ENCODE measurements at regions of chr19 and their contacts with region 1.

Region 1: GRCh38 chr19:30812099-30812678 is 440.0 kb downstream of the ZNF536 start:
- DNase-seq: no peak
- H3K4me3 Mint-ChIP-seq: no peak overlapping the region
- H3K27ac Mint-ChIP-seq: no peak overlapping the region
- H3K4me1 Mint-ChIP-seq: no peaks in the 10 kb centered on the region
- H3K27me3 Mint-ChIP-seq: peaks cover 13% of the 10 kb centered on the region

Region 2: DNA sequence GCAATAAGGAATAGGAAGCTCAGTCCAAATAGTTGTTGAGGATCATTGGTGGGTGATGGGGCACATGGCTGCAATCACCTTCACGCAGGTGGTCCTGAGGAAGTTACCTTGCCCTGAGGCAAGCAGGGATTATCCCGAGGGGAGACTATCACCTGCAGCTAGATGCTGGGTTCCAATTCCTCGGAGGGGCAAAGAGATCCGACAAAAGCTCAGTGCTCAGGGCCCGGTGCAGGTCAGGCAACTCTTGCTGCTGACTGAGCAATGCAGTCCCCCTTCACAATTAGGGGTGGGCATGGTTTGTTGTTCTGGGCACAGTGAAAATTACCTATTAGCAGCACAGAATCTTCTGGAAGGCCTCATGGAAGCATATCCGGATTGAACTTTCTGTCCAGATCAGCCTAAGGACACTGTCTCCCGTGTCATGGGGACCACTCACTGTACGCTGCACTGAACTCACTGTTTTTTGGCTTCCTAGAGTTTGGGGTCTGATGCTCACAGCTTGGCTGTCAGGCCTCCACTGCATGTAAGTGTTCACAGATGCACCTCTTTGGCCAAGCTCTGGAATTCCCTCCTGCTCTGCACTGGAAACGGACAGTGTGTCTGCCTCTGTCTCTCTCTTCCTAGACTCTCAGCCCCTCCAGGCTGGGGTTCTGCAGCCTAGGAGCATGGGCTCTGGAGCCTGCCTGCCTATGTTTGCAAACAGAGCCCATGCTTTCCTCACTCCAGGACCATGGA is 67.3 kb before region 1 on chr19:
- CTCF ChIA-PET with region 1: no interaction called
- intact Hi-C with region 1: no loop called
- DNase-seq: no peak
- H3K4me3 Mint-ChIP-seq: no peak overlapping the region
- H3K27ac Mint-ChIP-seq: no peak overlapping the region
- H3K4me1 Mint-ChIP-seq: no peaks in the 10 kb centered on the region
- H3K27me3 Mint-ChIP-seq: peaks cover 5% of the 10 kb centered on the region

Region 3: GRCh38 chr19:30757837-30758617 is 54.2 kb before region 1 on chr19:
- CTCF ChIA-PET with region 1: no interaction called
- intact Hi-C with region 1: no loop called
- DNase-seq: no peak
- H3K4me3 Mint-ChIP-seq: no peak overlapping the region
- H3K27ac Mint-ChIP-seq: no peak overlapping the region
- H3K4me1 Mint-ChIP-seq: no peaks in the 10 kb centered on the region
- H3K27me3 Mint-ChIP-seq: peaks cover 2% of the 10 kb centered on the region

Region 4: GRCh38 chr19:30791088-30791487 is 21.1 kb before region 1 on chr19:
- CTCF ChIA-PET with region 1: no interaction called
- intact Hi-C with region 1: no loop called
- DNase-seq: no peak
- H3K4me3 Mint-ChIP-seq: no peak overlapping the region
- H3K27ac Mint-ChIP-seq: no peak overlapping the region
- H3K4me1 Mint-ChIP-seq: no peaks in the 10 kb centered on the region
- H3K27me3 Mint-ChIP-seq: peaks cover 5% of the 10 kb centered on the region

Region 5: DNA sequence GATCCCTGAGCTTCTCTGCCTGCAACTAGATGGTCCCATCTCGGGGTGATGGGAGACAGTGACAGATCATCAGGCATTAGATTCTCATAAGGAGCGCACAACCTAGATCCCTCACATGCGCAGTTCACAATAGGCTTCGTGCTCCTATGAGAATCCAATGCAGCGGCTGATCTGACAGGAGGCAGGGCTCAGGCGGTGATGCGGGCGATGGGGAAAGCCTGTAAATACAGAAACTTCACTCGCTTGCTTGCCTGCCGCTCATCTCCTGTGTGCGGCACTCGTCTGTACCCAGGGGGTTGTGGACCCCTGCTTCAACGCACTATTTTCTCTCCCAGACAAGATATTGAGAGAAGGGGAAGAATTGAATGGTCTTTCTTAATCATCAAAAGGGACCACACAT is 33.9 kb after region 1 on chr19:
- CTCF ChIA-PET with region 1: no interaction called
- intact Hi-C with region 1: loop called (anchors 2 kb)
- DNase-seq: no peak
- H3K4me3 Mint-ChIP-seq: no peak overlapping the region
- H3K27ac Mint-ChIP-seq: no peak overlapping the region
- H3K4me1 Mint-ChIP-seq: no peaks in the 10 kb centered on the region
- H3K27me3 Mint-ChIP-seq: no peaks in the 10 kb centered on the region

Region 6: GRCh38 chr19:30896554-30896953 is 84.4 kb after region 1 on chr19:
- CTCF ChIA-PET with region 1: no interaction called
- intact Hi-C with region 1: no loop called
- DNase-seq: no peak
- H3K4me3 Mint-ChIP-seq: no peak overlapping the region
- H3K27ac Mint-ChIP-seq: no peak overlapping the region
- H3K4me1 Mint-ChIP-seq: no peaks in the 10 kb centered on the region
- H3K27me3 Mint-ChIP-seq: peaks cover 2% of the 10 kb centered on the region

Measured in activated naive CD4-positive, alpha-beta T cell treated with anti-CD3 and anti-CD28 coated beads for 36 hours (primary cell).